ENCODE measurements at regions of chr12 and their contacts with region 1.

Region 1: DNA sequence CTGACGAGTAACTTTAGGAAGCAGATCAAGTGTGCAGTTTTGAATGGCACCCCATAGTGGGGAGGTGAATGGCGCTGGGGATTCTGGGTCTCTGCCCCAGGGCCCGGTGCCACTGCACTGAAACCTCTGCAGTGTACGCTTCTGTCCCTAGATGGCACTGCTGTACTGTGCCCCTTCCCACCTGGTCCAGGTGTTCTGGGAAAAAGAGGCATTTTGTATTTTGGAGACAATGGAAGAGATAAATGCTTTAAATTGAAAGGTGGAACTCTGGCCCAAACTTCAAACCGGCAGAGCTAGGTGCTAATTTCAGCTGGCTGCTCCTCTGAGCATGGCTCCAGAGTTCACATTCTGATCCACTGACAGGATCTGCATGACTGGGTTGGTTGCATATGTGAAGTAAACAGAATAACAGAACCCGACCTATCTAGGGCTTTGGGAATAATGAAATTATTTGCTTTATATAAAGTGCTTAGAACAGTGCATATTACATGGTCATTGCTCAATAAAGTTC is 52.2 kb downstream of the KRT80 start:
- DNase-seq: peak; percentile 45
- H3K4me3 ChIP-seq: no peak overlapping the region
- H3K27ac ChIP-seq: no peak overlapping the region
- H3K4me1 ChIP-seq: no peaks in the 10 kb centered on the region
- CTCF ChIP-seq: peak; percentile 95

Region 2: DNA sequence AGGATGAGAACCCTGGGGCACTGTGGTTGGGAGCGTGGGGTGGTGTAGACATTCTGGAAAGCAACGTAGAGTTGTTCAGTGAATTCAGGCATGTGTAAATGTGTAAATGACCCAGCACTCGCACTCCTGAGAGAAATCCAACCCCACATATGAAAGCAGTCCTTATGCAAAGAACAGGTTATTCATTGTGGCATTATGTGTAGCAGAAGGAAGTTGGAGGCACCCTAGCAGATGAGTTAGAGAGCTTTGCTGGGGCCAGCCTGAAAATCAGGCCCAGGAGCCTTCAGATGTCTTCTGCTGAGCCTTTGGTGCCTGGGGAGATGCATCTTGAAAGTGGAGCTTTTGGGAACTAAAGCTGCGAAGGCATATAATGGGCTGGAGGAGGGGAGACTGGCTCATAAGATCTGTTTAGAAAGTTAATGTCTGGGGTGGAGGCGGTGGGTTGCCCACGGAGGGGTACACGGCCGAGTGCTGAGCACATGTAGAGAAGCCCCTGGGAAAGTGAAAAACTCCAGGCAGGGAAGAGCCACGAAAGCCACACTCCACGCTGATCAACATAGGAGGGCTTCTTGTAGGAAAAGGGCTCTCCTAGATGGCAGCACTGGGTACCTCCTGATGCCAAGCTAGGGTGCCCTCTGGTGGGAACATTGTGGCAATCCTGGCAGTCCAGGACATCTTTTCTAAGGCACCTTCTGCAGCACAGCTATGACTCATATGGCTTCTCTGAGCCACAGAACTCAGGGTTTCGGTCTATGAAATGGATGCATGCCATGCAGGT is 187.6 kb after region 1 on chr12:
- CTCF ChIA-PET with region 1: interaction called, 3 read pairs
- POLR2A ChIA-PET with region 1: no interaction called
- intact Hi-C with region 1: loop called (anchors 5 kb)
- DNase-seq: peak; percentile 80
- H3K4me3 ChIP-seq: no peak overlapping the region
- H3K27ac ChIP-seq: no peak overlapping the region
- H3K4me1 ChIP-seq: peaks cover 2% of the 10 kb centered on the region
- CTCF ChIP-seq: peak; percentile 94